Dendritic cell treated with granulocyte-macrophage colony-stimulating factor and Interleukin-4, amounts not matched to agents 40 ng/mL and 50 ng/mL, for 4 days (primary cell): ENCODE measurements at regions of chr4 and their contacts with region 1.

Region 1: GRCh38 chr4:169810325-169811323 is 52.9 kb upstream of the HPF1 start:
- H3K4me3 Mint-ChIP-seq: no peak overlapping the region
- H3K27ac Mint-ChIP-seq: no peak overlapping the region
- H3K4me1 Mint-ChIP-seq: no peaks in the 10 kb centered on the region
- H3K27me3 Mint-ChIP-seq: peaks cover 8% of the 10 kb centered on the region

Region 2: DNA sequence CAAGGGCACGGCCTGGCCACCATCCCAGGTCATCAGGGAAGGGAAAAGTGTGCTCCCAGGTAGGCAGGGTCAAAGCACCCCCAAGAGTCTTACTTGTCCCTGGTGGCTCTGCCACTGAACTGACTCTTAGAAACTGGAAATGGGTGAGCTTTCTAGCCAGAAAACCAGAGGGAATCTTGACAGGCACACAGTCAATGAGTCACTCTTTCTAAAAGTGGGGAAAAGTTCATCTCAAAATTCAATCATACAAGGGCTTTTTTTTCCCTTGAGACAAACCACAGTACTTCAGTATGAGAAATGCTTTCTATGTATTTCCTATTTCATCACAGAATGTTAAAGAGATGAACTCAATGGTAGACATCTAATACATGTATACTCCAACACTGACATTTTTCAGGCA is 65.3 kb before region 1 on chr4:
- intact Hi-C with region 1: no loop called
- H3K4me3 Mint-ChIP-seq: no peak overlapping the region
- H3K27ac Mint-ChIP-seq: no peak overlapping the region
- H3K4me1 Mint-ChIP-seq: no peaks in the 10 kb centered on the region
- H3K27me3 Mint-ChIP-seq: no peaks in the 10 kb centered on the region

Region 3: DNA sequence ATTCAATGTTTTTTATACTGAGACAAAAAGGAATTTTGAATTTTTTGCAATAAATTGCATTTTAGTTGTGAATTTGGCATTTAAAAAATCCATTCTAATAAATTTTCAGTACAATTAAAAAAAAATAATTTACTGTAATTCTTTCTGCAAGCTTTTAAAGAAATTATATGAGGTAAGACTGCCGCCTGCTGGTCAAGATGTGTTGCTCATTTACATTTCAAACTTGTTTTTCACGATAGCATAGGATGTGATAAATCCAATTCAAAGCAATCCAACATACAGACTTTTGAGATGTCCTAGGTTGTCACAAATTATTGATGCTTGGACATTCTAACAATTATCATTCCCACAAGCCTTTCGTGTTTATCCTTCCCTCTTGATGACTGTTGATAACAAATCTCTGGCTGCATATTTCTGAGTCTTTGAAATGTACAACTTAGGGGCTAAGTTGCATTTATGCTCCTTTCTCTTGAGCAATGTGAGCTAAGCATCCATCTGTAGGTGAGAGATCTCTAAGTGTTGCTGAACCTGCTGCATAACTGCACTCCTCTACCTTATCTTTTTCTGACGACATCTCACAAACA is 237.2 kb after region 1 on chr4:
- intact Hi-C with region 1: loop called (anchors 1 kb)
- H3K4me3 Mint-ChIP-seq: no peak overlapping the region
- H3K27ac Mint-ChIP-seq: no peak overlapping the region
- H3K4me1 Mint-ChIP-seq: no peaks in the 10 kb centered on the region
- H3K27me3 Mint-ChIP-seq: peaks cover 12% of the 10 kb centered on the region